Sigmoid colon (tissue), 7 donors: ENCODE measurements at regions of chr13 and their contacts with region 1.

Region 1: DNA sequence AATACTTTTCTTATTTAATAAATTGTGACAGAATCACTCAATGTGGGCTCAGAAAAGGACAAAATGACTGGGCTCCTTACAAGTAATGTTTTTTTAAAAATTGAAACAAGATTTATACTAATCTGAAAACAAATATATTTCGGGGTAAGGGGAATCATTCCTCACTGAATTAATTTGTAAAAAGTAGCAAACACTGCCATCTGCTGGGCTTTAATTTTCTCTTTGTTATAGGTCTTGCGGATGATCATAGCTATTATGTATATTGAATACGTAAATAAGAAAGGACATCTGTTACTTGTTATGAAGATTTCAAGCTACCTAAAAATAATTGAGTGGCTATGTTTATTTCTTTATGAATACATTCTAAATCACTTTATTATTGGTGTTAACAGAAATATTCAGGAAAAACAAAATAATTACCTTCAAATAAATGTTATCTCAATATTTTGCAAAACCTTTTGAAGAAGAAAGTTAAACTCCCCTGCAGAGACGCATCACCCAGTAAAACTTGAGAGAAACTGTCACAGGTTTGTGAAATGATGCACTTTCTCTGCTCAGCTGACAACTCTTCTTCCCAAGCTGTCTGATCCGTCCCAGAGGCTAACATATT is 17.8 kb upstream of the ENOX1 start:
- DNase-seq: no peak
- H3K4me3 ChIP-seq: peak overlapping the region in 1 of 4 donors; percentile 21
- H3K27ac ChIP-seq: peak overlapping the region in 2 of 4 donors; percentile 44 to 69
- H3K4me1 ChIP-seq: peaks cover 0 to 11% (median 7%) of the 10 kb centered on the region in 4 donors
- H3K27me3 ChIP-seq: no peaks in the 10 kb centered on the region
- CTCF ChIP-seq: peak; percentile 10 to 59 (median 41)
- EP300 ChIP-seq: no peak
- POLR2A ChIP-seq: no peak

Region 2: GRCh38 chr13:42594970-42595571 is 1209.5 kb before region 1 on chr13:
- intact Hi-C with region 1: loop called (anchors 5 kb)
- DNase-seq: peak; percentile 79
- H3K4me3 ChIP-seq: no peak overlapping the region
- H3K27ac ChIP-seq: no peak overlapping the region
- H3K4me1 ChIP-seq: peaks cover 0 to 14% (median 3%) of the 10 kb centered on the region in 4 donors
- H3K27me3 ChIP-seq: no peaks in the 10 kb centered on the region
- CTCF ChIP-seq: peak; percentile 43 to 84 (median 69)
- EP300 ChIP-seq: no peak
- POLR2A ChIP-seq: no peak

Region 3: DNA sequence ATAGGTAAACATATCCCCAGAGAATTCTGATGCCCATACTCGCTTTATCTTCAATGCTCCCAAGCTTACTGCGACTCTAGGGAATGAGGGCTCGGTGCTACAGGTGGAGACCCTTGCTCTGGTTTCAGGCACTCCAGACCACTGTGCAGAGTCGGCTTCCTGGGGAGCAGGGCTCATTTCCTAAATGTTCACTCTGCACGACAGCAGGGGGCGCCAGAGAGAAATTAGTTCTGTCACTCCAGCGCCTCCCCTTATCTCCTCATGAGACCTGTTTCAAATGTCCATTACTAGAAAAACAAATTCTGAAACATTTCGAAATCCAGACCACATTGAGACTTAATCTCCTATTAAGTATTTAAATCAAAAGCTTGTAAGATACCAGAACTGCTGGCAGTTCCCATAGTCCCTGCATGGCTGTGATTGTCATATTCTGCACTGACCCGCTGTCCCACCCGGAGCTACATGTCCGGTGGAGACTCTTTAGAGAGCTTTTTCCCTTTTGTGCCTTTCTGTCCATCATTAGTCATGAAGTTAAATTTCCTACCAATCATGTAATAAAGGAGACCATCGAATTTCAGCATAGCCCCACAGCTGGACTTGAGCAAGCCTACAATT is 834.9 kb before region 1 on chr13:
- intact Hi-C with region 1: loop called (anchors 5 kb)
- DNase-seq: peak; percentile 88
- H3K4me3 ChIP-seq: no peak overlapping the region
- H3K27ac ChIP-seq: no peak overlapping the region
- H3K4me1 ChIP-seq: peaks cover 0 to 16% (median 6%) of the 10 kb centered on the region in 4 donors
- H3K27me3 ChIP-seq: no peaks in the 10 kb centered on the region
- CTCF ChIP-seq: peak; percentile 59 to 80 (median 68)
- EP300 ChIP-seq: no peak
- POLR2A ChIP-seq: no peak

Region 4: GRCh38 chr13:43085545-43085944 is 719.0 kb before region 1 on chr13:
- intact Hi-C with region 1: loop called (anchors 2 kb)
- DNase-seq: no peak
- H3K4me3 ChIP-seq: no peak overlapping the region
- H3K27ac ChIP-seq: no peak overlapping the region
- H3K4me1 ChIP-seq: peaks cover 0 to 19% (median 12%) of the 10 kb centered on the region in 4 donors
- H3K27me3 ChIP-seq: no peaks in the 10 kb centered on the region
- CTCF ChIP-seq: peak; percentile 58 to 71 (median 63)
- EP300 ChIP-seq: no peak
- POLR2A ChIP-seq: no peak

Region 5: GRCh38 chr13:43196086-43196621 is 608.4 kb before region 1 on chr13:
- intact Hi-C with region 1: loop called (anchors 10 kb)
- DNase-seq: peak; percentile 68
- H3K4me3 ChIP-seq: no peak overlapping the region
- H3K27ac ChIP-seq: no peak overlapping the region
- H3K4me1 ChIP-seq: peaks cover 0 to 17% (median 5%) of the 10 kb centered on the region in 4 donors
- H3K27me3 ChIP-seq: no peaks in the 10 kb centered on the region
- CTCF ChIP-seq: no peak
- EP300 ChIP-seq: no peak
- POLR2A ChIP-seq: no peak

Region 6: GRCh38 chr13:43730642-43731041 is 73.9 kb before region 1 on chr13:
- intact Hi-C with region 1: no loop called
- DNase-seq: peak; percentile 84
- H3K4me3 ChIP-seq: no peak overlapping the region
- H3K27ac ChIP-seq: peak overlapping the region in 3 of 4 donors; percentile 38 to 46 (median 44)
- H3K4me1 ChIP-seq: peaks cover 0 to 50% (median 33%) of the 10 kb centered on the region in 4 donors
- H3K27me3 ChIP-seq: no peaks in the 10 kb centered on the region
- CTCF ChIP-seq: no peak
- EP300 ChIP-seq: no peak
- POLR2A ChIP-seq: no peak